Transverse colon (tissue), 4 donors: ENCODE measurements at regions of chr5 and their contacts with region 1.

Region 1: GRCh38 chr5:65035211-65036206 is 266.8 kb downstream of the CWC27 start:
- DNase-seq: peak; percentile 88
- H3K4me3 ChIP-seq: peak overlapping the region; percentile 56 to 76 (median 66)
- H3K27ac ChIP-seq: peak overlapping the region; percentile 89 to 91 (median 91)
- H3K4me1 ChIP-seq: peaks cover 7 to 34% (median 11%) of the 10 kb centered on the region in 4 donors
- H3K27me3 ChIP-seq: no peaks in the 10 kb centered on the region
- CTCF ChIP-seq: peak in 3 of 5 experiments; percentile 1 to 49 (median 6)
- EP300 ChIP-seq: no peak
- POLR2A ChIP-seq: no peak

Region 2: DNA sequence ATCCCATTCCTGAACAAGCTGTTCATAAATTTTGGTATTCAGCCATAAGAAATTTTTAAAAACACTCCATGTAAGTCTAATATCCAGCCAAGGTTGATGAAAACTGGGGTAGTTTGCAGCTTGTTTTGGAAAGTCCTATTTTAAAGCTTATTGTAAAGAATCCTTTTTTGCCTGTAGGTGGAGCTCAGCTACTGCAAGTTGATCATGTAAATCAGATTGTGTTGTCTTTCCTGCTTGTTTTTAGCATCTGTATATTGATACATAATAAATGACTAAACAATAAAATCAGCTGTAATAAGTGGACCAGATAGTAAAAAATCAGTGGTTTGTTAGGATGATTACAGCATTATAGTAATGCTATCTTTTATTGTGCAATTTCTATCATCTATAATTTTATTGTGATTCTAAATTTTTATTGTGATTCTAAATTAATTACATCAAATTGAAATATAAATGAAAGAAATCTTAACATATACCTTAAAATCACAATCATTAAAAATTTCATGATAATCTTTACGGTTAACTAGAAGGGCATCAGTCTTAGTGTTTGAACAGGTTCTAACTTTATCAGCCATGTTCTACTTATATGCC is 224.4 kb before region 1 on chr5:
- in situ Hi-C with region 1: loop called in 1 of 4 experiments (anchors 25 kb)
- intact Hi-C with region 1: no loop called
- DNase-seq: no peak
- H3K4me3 ChIP-seq: no peak overlapping the region
- H3K27ac ChIP-seq: no peak overlapping the region
- H3K4me1 ChIP-seq: no peaks in the 10 kb centered on the region
- H3K27me3 ChIP-seq: no peaks in the 10 kb centered on the region
- CTCF ChIP-seq: peak; percentile 51 to 66 (median 62)
- EP300 ChIP-seq: no peak
- POLR2A ChIP-seq: no peak

Region 3: GRCh38 chr5:66197771-66198405 is 1162.4 kb after region 1 on chr5:
- in situ Hi-C with region 1: no loop called
- intact Hi-C with region 1: no loop called
- DNase-seq: no peak
- H3K4me3 ChIP-seq: no peak overlapping the region
- H3K27ac ChIP-seq: no peak overlapping the region
- H3K4me1 ChIP-seq: no peaks in the 10 kb centered on the region
- H3K27me3 ChIP-seq: no peaks in the 10 kb centered on the region
- CTCF ChIP-seq: no peak
- EP300 ChIP-seq: no peak
- POLR2A ChIP-seq: no peak